Activated CD4-positive, alpha-beta T cell treated with anti-CD3 and anti-CD28 coated beads for 36 hours (primary cell): ENCODE measurements at regions of chr2 and their contacts with region 1.

Region 1: GRCh38 chr2:226791487-226792081 is 8.0 kb downstream of the IRS1 start:
- DNase-seq: peak; percentile 96
- ATAC-seq: peak; percentile 98
- H3K4me3 Mint-ChIP-seq: peak overlapping the region; percentile 79
- H3K27ac Mint-ChIP-seq: peak overlapping the region; percentile 96
- H3K4me1 Mint-ChIP-seq: peaks cover 41% of the 10 kb centered on the region
- H3K27me3 Mint-ChIP-seq: no peaks in the 10 kb centered on the region

Region 2: DNA sequence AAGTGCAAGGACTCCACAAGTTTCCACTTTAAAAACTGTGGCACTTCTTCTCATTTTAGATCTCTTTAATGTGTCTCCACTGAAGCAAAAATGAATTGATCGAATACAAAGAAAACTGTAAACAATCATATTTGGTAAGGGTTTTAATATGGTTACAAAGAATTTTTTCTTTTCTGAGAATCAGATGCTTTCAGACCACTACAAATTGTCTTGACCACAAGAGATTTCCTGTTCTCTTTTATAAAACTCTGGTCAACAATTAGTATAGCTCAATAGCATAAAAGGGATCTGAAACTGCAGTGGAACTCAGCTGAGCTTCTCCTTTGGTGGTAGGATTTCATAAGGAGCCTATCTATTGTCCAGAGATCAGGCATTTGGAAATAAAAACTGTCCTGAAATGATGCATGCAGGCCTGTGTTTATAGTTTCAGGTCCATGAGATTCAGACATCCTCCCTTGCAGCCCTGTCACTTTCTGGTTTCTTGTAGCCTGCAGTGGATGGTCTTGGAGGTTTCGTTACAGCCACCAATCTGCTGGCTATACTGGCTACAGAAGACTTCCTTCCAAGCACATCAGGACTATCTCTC is 1869.3 kb before region 1 on chr2:
- CTCF ChIA-PET with region 1: no interaction called
- POLR2A ChIA-PET with region 1: no interaction called
- intact Hi-C with region 1: loop called in 1 of 2 experiments (anchors 10 kb)
- DNase-seq: no peak
- ATAC-seq: no peak
- H3K4me3 Mint-ChIP-seq: no peak overlapping the region
- H3K27ac Mint-ChIP-seq: peak overlapping the region; percentile 85
- H3K4me1 Mint-ChIP-seq: peaks cover 59% of the 10 kb centered on the region
- H3K27me3 Mint-ChIP-seq: no peaks in the 10 kb centered on the region

Region 3: GRCh38 chr2:226030788-226031646 is 760.6 kb before region 1 on chr2:
- CTCF ChIA-PET with region 1: no interaction called
- POLR2A ChIA-PET with region 1: no interaction called
- intact Hi-C with region 1: loop called in 1 of 2 experiments (anchors 5 kb)
- DNase-seq: peak; percentile 49
- ATAC-seq: peak; percentile 66
- H3K4me3 Mint-ChIP-seq: peak overlapping the region; percentile 64
- H3K27ac Mint-ChIP-seq: peak overlapping the region; percentile 39
- H3K4me1 Mint-ChIP-seq: peaks cover 29% of the 10 kb centered on the region
- H3K27me3 Mint-ChIP-seq: peaks cover 49% of the 10 kb centered on the region

Region 4: DNA sequence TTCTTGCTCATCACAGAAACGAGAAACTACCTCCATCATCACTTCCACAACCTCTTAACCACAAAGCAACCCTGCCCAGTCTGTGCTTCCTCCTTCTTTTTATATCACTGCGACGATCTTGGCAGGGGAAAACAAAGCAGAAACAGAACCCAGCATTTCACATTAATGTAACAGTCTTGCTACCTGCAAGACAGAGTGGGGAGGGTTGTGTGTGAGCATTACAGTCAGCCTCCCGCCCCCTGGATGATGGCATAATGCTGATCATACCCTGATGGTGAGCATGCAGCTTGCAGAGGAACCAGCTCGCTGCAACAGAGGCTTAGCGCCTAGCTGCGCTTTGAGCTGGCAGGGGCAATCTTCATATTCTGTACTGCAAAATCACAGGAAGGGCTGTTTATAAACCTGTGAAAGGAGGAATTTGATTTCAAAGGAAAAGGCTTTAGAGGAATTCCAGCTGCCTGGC is 368.1 kb before region 1 on chr2:
- CTCF ChIA-PET with region 1: no interaction called
- POLR2A ChIA-PET with region 1: no interaction called
- intact Hi-C with region 1: loop called in 1 of 2 experiments (anchors 10 kb)
- DNase-seq: peak; percentile 69
- ATAC-seq: peak; percentile 94
- H3K4me3 Mint-ChIP-seq: no peak overlapping the region
- H3K27ac Mint-ChIP-seq: no peak overlapping the region
- H3K4me1 Mint-ChIP-seq: peaks cover 12% of the 10 kb centered on the region
- H3K27me3 Mint-ChIP-seq: peaks cover 14% of the 10 kb centered on the region

Region 5: GRCh38 chr2:226772389-226773179 is 19.0 kb before region 1 on chr2:
- CTCF ChIA-PET with region 1: interaction called, 4 read pairs
- POLR2A ChIA-PET with region 1: no interaction called
- intact Hi-C with region 1: loop called in 1 of 2 experiments (anchors 2 kb)
- DNase-seq: no peak
- ATAC-seq: peak; percentile 75
- H3K4me3 Mint-ChIP-seq: peak overlapping the region; percentile 12
- H3K27ac Mint-ChIP-seq: peak overlapping the region; percentile 44
- H3K4me1 Mint-ChIP-seq: peaks cover 24% of the 10 kb centered on the region
- H3K27me3 Mint-ChIP-seq: no peaks in the 10 kb centered on the region

Region 6: DNA sequence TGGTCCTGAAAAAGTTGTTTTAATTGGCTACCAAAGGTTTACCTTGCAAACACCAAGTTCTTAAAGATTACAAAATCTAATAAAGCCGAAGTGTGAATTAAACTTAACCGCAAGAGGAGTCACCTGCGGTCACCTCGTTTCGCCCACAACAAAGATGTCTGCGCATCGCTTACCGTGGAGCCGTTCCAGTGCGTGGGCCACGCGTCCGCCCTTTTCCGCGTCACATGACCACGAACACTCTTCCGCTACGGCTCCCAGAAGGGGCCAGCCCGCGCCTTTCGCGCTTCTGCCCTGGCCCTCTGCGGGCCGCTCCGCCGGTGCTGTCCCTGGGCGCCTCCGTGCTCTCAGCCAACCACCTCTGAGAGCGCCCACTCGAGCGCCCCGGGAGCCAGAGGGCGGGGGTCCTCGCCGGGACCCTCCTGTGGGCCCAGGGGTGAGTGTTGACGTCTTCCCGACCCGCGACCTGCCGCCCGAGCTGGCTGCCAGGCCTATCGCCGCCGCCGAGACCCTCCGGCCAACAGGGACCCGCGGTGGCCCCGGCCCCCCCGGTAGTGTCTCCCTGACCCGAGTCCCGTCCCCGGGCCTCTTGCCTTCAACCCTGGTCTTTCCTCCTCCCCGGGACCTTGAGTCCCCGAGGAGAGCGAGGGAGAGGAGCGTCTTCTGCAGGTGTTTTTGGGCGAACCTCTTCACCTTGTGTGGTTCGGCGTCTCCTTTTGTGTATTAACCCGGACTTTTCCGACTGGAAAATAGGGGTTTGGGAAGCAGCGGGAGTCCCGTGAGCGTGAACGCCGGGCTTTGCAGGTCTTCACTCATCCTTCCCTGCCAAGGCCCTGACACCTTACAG is 533.6 kb after region 1 on chr2 and contains the start of gene MFF:
- CTCF ChIA-PET with region 1: no interaction called
- POLR2A ChIA-PET with region 1: no interaction called
- intact Hi-C with region 1: loop called (anchors 2 to 10 kb)
- DNase-seq: peak; percentile 97
- ATAC-seq: peak; percentile 97
- H3K4me3 Mint-ChIP-seq: peak within 1 kb of the TSS; percentile 89
- H3K27ac Mint-ChIP-seq: peak within 1 kb of the TSS; percentile 91
- H3K4me1 Mint-ChIP-seq: peaks cover 27% of the 10 kb centered on the region
- H3K27me3 Mint-ChIP-seq: no peaks in the 10 kb centered on the region
- total RNA-seq, gene MFF: 78.3 to 104 TPM